Sigmoid colon (tissue), 7 donors: ENCODE measurements at regions of chr12 and their contacts with region 1.

Region 1: GRCh38 chr12:120265473-120266179 is at the start of gene PXN:
- DNase-seq: peak; percentile 94
- H3K4me3 ChIP-seq: peak within 1 kb of the TSS; percentile 86 to 99 (median 91)
- H3K27ac ChIP-seq: peak within 1 kb of the TSS; percentile 88 to 96 (median 95)
- H3K4me1 ChIP-seq: peaks cover 0 to 45% (median 43%) of the 10 kb centered on the region in 4 donors
- H3K27me3 ChIP-seq: no peaks in the 10 kb centered on the region
- CTCF ChIP-seq: peak; percentile 64 to 85 (median 68)
- EP300 ChIP-seq: no peak
- POLR2A ChIP-seq: peak in 1 of 2 donors; percentile 31
- total RNA-seq, gene PXN: 41.0 to 127 (median 42.7) TPM

Region 2: DNA sequence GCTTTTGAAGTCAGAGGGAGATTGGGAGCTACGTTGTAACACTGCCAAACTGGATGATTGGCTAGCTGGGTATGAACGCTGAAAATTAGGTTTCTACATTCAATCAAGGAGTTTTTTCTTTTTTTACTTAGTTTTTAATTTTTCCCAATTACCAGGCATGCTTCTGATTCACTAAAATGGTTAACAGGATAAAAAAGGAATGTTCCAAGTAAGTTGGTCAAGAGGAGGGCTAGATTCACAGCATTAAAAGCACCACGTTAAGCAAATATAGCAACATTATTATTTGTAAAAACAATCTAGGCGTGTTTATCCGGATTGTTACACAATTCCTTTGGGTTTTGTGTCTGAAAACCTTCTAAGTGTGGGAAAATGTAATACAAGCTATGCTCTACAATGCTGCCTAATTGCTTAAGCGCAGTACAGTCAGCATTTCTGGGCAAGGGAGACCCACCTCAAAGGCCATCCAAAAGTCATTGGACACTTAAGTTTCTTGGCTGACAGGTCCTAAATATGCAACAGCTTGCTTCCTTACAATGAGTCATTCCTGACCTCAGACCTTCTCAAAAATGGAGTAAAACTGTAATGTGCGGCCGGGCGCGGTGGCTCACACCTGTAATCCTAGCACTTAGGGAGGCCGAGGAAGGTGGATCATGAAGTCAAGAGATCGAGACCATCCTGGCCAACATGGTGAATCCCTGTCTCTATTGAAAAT is 65.9 kb before region 1 on chr12:
- intact Hi-C with region 1: loop called (anchors 2 kb)
- DNase-seq: peak; percentile 85
- H3K4me3 ChIP-seq: peak overlapping the region; percentile 76 to 98 (median 84)
- H3K27ac ChIP-seq: peak overlapping the region; percentile 85 to 95 (median 86)
- H3K4me1 ChIP-seq: peaks cover 0 to 36% (median 30%) of the 10 kb centered on the region in 4 donors
- H3K27me3 ChIP-seq: no peaks in the 10 kb centered on the region
- CTCF ChIP-seq: no peak
- EP300 ChIP-seq: peak in 1 of 4 donors; percentile 9
- POLR2A ChIP-seq: no peak

Region 3: GRCh38 chr12:120228291-120229070 is 37.1 kb before region 1 on chr12:
- intact Hi-C with region 1: loop called (anchors 1 kb)
- DNase-seq: peak; percentile 94
- H3K4me3 ChIP-seq: peak overlapping the region in 2 of 4 donors; percentile 2 to 11
- H3K27ac ChIP-seq: peak overlapping the region; percentile 89 to 95 (median 92)
- H3K4me1 ChIP-seq: peaks cover 0 to 95% (median 87%) of the 10 kb centered on the region in 4 donors
- H3K27me3 ChIP-seq: no peaks in the 10 kb centered on the region
- CTCF ChIP-seq: peak; percentile 97 to 99 (median 98)
- EP300 ChIP-seq: no peak
- POLR2A ChIP-seq: no peak

Region 4: DNA sequence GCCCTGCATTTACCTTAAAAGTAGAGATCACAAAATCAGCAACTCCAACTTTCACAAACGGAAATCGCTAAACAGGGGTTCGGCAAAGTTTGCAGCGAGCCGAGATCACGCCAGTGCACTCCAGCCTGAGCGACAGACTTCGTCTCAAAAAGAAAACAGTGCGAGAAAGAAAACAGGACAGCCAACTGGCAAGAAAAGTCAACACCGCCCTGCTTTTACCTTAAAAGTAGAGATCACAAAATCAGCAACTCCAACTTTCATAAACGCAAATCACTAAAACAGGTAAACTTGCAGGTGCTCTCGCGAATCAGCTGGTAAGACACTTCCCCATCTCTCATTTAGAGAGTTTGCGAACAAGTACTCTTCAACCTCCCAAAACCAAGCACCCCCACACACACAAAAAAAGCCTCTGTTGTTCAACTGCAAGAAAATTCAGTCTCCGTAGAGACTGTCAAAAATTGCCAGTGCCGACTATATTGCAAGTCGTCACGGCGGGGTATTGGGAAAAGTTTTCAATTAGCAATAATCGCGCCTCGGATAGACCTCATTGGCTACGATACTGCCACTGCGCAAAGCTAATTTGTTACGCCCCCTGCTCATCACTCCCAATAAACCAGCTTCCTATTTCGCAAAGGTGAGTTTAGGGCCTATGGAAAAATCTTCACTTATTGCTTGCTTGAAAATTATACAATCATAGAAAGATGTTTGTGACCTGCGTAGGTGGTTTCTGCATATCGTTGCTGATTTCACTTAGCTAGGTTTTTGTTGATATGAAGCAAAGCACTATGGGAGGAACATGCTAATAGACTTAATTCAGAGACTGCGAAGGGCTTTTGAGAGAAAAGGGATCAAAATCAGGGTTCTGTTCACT is 27.3 kb after region 1 on chr12 and contains the start of gene RNU4-1:
- intact Hi-C with region 1: loop called (anchors 2 kb)
- DNase-seq: peak; percentile 88
- H3K4me3 ChIP-seq: peak within 1 kb of the TSS; percentile 54 to 66 (median 57)
- H3K27ac ChIP-seq: peak within 1 kb of the TSS; percentile 92 to 98 (median 94)
- H3K4me1 ChIP-seq: peaks cover 0 to 12% (median 5%) of the 10 kb centered on the region in 4 donors
- H3K27me3 ChIP-seq: no peaks in the 10 kb centered on the region
- CTCF ChIP-seq: no peak
- EP300 ChIP-seq: no peak
- POLR2A ChIP-seq: peak; percentile 60 to 81
- total RNA-seq, gene RNU4-1: under 0.01 TPM in 3 of 4 donors, not detected in the other